ENCODE measurements at regions of chr9 and their contacts with region 1.

Region 1: GRCh38 chr9:117722108-117722761 is 18.0 kb downstream of the TLR4 start:
- DNase-seq: no peak
- H3K4me3 ChIP-seq: no peak overlapping the region
- H3K27ac ChIP-seq: no peak overlapping the region
- H3K4me1 ChIP-seq: peaks cover 9% of the 10 kb centered on the region
- H3K27me3 ChIP-seq: no peaks in the 10 kb centered on the region
- CTCF ChIP-seq: no peak
- POLR2A ChIP-seq: no peak

Region 2: DNA sequence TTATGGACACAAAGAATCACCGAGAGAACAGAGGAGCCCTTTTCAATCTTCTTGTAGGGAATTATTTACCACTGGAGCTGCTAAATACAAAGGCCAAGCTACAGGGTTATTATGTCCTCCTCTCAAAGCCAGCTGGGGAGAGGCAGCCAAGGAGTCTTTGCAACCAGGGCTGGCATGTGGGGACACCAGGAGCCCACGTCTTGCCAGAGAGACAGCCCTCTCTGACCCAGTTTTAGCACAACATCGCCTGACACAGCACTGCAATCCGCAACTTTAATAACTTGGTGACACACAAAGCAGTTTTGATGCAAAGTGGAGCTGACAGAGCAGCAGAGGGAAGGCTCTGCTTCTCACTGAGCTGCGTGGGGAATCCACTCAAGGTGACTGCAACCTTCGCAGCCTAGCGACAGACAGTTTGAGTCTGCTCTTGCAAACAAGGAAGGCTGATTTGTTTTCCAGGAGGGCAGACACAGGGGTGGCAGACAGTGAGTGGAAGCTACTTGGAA is 15.5 kb after region 1 on chr9:
- intact Hi-C with region 1: loop called (anchors 1 kb)
- DNase-seq: no peak
- H3K4me3 ChIP-seq: no peak overlapping the region
- H3K27ac ChIP-seq: no peak overlapping the region
- H3K4me1 ChIP-seq: no peaks in the 10 kb centered on the region
- H3K27me3 ChIP-seq: no peaks in the 10 kb centered on the region
- CTCF ChIP-seq: no peak
- POLR2A ChIP-seq: no peak